Activated T-helper 2 cell treated with anti-CD3 and anti-CD28 coated beads, Interferon-gamma antibody, Interleukin-2, Interleukin-4, amounts not matched to agents 10 μg/mL and 5 μg/mL and 100 μg/mL, durations not matched to agents 14 hours and 24 hours and 36 hours (primary cell): ENCODE measurements at regions of chr1 and their contacts with region 1.

Region 1: DNA sequence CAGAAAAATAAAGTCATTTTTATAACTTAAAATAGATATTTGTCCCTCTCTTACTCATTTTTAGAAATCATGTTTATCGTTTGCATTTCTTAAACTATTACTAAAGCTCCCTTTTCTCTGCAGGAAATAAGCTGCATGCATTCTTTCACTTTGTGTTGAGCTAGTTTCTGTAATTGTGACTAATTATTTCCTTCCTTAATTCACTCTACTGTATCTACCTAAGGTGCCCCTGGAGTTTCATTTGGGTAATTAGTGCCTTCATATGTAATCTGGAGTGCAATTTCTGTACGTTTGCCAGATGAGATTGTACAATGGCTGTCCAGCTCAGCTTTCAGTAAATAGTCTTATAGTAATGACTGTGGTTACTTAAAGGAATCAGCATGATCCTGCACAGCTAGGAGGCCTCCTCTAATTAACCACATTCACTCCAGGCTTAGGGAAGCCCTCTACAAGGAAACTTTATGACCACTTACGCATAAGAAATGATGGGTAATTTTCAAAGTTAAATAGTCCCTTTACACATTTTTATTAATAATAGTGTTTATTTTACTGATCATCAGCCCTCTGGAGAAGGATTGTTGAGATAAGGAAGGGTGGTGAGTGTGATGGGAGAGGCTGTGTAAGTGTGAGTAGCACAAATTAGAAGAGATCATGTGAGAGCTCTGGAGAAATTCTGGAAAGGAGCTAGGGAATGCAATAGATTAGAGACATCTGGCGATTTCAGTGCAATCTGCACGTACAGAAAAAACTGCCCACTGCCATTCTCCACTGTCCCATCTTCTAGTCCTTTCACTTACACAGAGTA is 86.8 kb downstream of the LRRC8C start:
- DNase-seq: no peak
- H3K4me3 Mint-ChIP-seq: peak overlapping the region; percentile 75
- H3K27ac Mint-ChIP-seq: peak overlapping the region; percentile 99
- H3K4me1 Mint-ChIP-seq: peaks cover 82% of the 10 kb centered on the region
- H3K27me3 Mint-ChIP-seq: no peaks in the 10 kb centered on the region

Region 2: DNA sequence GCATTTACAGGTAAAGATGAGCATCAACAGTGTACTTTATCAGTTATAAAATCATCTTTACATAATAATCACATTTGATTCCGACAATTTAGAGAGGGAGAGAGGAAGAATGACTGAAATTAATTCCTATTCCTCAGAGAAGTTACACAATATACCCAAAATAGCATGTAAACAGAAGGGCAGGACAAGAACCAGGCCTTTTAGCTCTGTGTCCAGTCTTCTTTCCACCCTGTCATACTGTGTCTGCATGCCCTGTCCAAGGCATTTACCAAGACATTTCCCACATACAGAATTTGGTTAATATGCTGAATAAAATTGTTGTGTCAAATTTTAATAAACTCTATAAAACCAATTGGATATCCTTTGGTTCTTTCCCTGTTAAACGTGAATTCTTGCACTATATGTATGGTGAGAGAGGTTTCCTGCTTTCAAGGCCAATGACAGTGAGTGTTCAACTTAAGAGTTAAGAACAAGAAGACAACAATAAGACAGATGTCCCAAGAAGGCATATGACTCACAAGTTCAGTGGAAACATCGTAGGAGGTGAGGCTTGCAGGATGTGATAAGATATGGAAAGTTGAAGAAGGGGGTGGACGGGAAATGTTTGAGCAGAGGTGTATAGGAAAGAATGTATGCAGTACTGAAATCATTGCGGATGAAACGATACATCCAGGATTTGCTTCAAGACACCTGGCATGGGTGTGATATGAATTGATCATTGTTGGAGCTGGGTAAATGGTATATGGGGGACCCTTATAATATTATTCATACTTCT is 174.3 kb before region 1 on chr1:
- intact Hi-C with region 1: loop called (anchors 1 kb)
- DNase-seq: peak; percentile 26
- H3K4me3 Mint-ChIP-seq: peak overlapping the region; percentile 30
- H3K27ac Mint-ChIP-seq: peak overlapping the region; percentile 93
- H3K4me1 Mint-ChIP-seq: peaks cover 79% of the 10 kb centered on the region
- H3K27me3 Mint-ChIP-seq: no peaks in the 10 kb centered on the region

Region 3: GRCh38 chr1:89632657-89633247 is 87.0 kb before region 1 on chr1 and contains the start of gene LRRC8C:
- intact Hi-C with region 1: loop called (anchors 1 kb)
- DNase-seq: peak; percentile 84
- H3K4me3 Mint-ChIP-seq: peak within 1 kb of the TSS; percentile 92
- H3K27ac Mint-ChIP-seq: peak within 1 kb of the TSS; percentile 93
- H3K4me1 Mint-ChIP-seq: peaks cover 72% of the 10 kb centered on the region
- H3K27me3 Mint-ChIP-seq: no peaks in the 10 kb centered on the region
- total RNA-seq, gene LRRC8C: 56.1 and 56.5 TPM in 2 replicates

Region 4: DNA sequence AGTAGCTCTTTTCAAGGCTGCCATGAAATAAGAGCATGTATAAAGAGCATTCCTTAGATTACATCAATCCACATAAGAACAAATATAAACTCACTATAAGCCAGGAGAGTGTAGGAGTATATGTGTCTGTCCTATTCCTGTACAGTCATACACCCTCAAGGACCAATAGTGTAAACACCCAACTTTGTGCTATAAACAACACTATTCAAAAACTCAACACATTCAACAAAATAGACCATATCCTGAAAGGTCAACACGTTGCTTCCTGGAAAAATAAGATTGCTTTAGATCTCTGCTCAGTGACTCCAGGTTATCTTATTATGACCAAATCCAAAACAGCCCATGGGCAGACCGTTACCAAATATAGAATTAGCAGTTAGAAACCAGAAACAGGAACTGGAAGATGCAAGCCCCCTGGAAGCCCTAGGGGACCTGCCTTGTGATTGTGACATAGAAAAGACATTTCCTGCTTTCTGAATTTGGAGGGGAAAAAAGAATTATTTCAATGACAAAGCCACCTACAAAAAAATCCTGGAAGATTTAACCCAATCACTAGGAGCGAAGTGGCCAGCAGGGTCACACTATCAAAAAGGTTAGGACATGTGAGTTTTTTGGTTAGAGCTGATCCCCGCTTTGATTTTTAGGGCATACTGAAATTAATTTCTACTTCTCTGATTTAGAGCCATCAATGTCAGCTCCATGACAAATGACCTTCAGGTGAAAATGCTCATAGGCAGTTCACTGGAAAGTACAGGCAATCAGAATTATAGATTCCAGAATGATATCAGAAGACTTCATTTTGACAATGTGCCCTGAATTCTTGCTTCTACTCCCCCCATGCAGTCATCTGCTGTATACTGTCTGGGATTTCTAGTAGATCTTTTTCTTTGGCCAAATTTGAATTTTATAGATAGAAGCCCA is 26.8 kb before region 1 on chr1:
- intact Hi-C with region 1: loop called (anchors 1 kb)
- DNase-seq: no peak
- H3K4me3 Mint-ChIP-seq: no peak overlapping the region
- H3K27ac Mint-ChIP-seq: peak overlapping the region; percentile 83
- H3K4me1 Mint-ChIP-seq: peaks cover 81% of the 10 kb centered on the region
- H3K27me3 Mint-ChIP-seq: no peaks in the 10 kb centered on the region

Region 5: GRCh38 chr1:89757532-89757931 is 37.8 kb after region 1 on chr1:
- intact Hi-C with region 1: loop called (anchors 2 kb)
- DNase-seq: peak; percentile 57
- H3K4me3 Mint-ChIP-seq: peak overlapping the region; percentile 77
- H3K27ac Mint-ChIP-seq: peak overlapping the region; percentile 93
- H3K4me1 Mint-ChIP-seq: peaks cover 82% of the 10 kb centered on the region
- H3K27me3 Mint-ChIP-seq: no peaks in the 10 kb centered on the region